Activated B cell treated with CpG ODN at 0.5 μM for 24 hours (primary cell): ENCODE measurements at regions of chr3 and their contacts with region 1.

Region 1: GRCh38 chr3:152183473-152183872 is 85.3 kb upstream of the MBNL1 start:
- DNase-seq: peak; percentile 20
- ATAC-seq: peak; percentile 87
- H3K4me3 Mint-ChIP-seq: peak overlapping the region; percentile 5
- H3K27ac Mint-ChIP-seq: no peak overlapping the region
- H3K4me1 Mint-ChIP-seq: peaks cover 30% of the 10 kb centered on the region
- H3K27me3 Mint-ChIP-seq: no peaks in the 10 kb centered on the region
- CTCF ChIP-seq: no peak

Region 2: DNA sequence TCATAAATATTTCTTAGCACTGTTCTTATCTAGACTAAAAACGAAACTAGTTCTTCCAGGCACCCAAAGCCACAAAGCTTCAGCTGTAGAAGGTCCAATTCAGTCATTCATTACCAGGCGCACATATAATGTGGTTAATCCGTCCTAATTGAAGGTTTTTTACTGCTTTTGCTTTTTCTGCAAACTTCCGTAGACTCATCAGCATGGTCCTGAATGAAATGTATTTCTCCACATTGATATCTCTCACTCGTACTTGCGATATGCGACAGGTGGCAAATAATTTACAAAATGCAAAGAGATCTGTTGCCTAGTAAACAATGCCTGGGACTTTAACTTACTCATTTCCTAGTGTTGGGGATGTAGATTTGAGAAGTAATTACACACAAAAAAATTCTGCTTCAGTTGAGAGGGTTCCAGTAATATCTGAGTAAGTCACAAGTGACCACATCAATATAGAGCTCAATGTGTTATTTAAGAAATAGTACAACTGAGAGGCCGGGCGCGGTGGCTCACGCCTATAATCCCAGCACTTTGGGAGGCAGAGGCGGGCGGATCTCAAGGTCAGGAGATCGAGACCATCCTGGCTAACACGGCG is 10.3 kb after region 1 on chr3:
- CTCF ChIA-PET with region 1: interaction called, 19 read pairs
- POLR2A ChIA-PET with region 1: interaction called, 14 read pairs
- intact Hi-C with region 1: no loop called
- DNase-seq: no peak
- ATAC-seq: peak; percentile 53
- H3K4me3 Mint-ChIP-seq: peak overlapping the region; percentile 73
- H3K27ac Mint-ChIP-seq: peak overlapping the region; percentile 78
- H3K4me1 Mint-ChIP-seq: peaks cover 77% of the 10 kb centered on the region
- H3K27me3 Mint-ChIP-seq: no peaks in the 10 kb centered on the region
- CTCF ChIP-seq: no peak

Region 3: GRCh38 chr3:152205097-152205593 is 21.7 kb after region 1 on chr3:
- CTCF ChIA-PET with region 1: interaction called, 6 read pairs
- POLR2A ChIA-PET with region 1: interaction called, 20 read pairs
- intact Hi-C with region 1: no loop called
- DNase-seq: no peak
- ATAC-seq: peak; percentile 72
- H3K4me3 Mint-ChIP-seq: peak overlapping the region; percentile 95
- H3K27ac Mint-ChIP-seq: peak overlapping the region; percentile 99
- H3K4me1 Mint-ChIP-seq: peaks cover 58% of the 10 kb centered on the region
- H3K27me3 Mint-ChIP-seq: no peaks in the 10 kb centered on the region
- CTCF ChIP-seq: no peak

Region 4: GRCh38 chr3:152258448-152259393 is 75.2 kb after region 1 on chr3:
- CTCF ChIA-PET with region 1: interaction called, 10 read pairs
- POLR2A ChIA-PET with region 1: no interaction called
- intact Hi-C with region 1: no loop called
- DNase-seq: no peak
- ATAC-seq: peak; percentile 23
- H3K4me3 Mint-ChIP-seq: peak overlapping the region; percentile 39
- H3K27ac Mint-ChIP-seq: peak overlapping the region; percentile 86
- H3K4me1 Mint-ChIP-seq: peaks cover 79% of the 10 kb centered on the region
- H3K27me3 Mint-ChIP-seq: no peaks in the 10 kb centered on the region
- CTCF ChIP-seq: no peak

Region 5: GRCh38 chr3:152438181-152438580 is 254.7 kb after region 1 on chr3:
- CTCF ChIA-PET with region 1: interaction called, 89 read pairs
- POLR2A ChIA-PET with region 1: no interaction called
- intact Hi-C with region 1: loop called (anchors 1 kb)
- DNase-seq: no peak
- ATAC-seq: no peak
- H3K4me3 Mint-ChIP-seq: no peak overlapping the region
- H3K27ac Mint-ChIP-seq: no peak overlapping the region
- H3K4me1 Mint-ChIP-seq: peaks cover 78% of the 10 kb centered on the region
- H3K27me3 Mint-ChIP-seq: no peaks in the 10 kb centered on the region
- CTCF ChIP-seq: no peak

Region 6: DNA sequence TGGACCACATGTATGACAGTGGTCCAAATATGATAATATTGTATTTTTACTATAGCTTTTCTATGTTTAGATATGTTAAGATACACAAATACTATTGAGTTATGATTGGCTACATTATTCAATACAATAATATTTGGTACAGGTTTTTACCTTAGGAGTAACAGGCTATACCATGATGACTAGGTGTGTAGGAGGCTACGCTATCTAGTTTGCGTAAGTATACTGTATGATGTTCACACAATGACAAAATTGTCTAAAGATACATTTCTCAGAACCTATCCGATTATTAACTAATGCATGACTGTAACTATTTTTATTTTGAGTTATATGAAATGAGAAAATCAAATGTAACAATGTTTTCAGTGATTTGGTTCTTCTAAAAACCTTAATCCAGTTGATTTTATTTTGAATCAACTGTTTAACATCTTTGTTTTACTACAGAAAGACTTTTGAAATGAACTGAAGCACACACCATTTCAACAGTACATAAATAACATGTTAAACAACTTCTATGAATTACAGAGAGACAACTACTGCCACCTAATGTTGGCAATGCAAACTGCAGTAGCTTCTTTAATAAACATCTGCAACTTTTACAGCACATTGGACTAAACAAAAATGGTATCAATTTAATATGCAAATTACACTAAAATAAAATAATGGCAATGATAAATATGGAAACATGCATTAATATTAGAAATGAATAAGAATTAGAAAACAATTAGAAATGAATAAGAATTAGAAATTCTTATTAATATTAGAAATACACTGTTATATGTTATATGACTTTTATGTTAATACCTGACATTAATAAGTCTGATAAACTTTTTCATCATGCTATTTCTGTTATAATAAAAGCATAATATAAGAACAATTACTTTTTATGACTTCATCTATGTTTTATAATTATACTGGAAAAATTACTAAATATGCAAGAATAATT is 341.0 kb after region 1 on chr3:
- CTCF ChIA-PET with region 1: no interaction called
- POLR2A ChIA-PET with region 1: no interaction called
- intact Hi-C with region 1: loop called (anchors 5 kb)
- DNase-seq: no peak
- ATAC-seq: peak; percentile 77
- H3K4me3 Mint-ChIP-seq: no peak overlapping the region
- H3K27ac Mint-ChIP-seq: no peak overlapping the region
- H3K4me1 Mint-ChIP-seq: peaks cover 33% of the 10 kb centered on the region
- H3K27me3 Mint-ChIP-seq: no peaks in the 10 kb centered on the region
- CTCF ChIP-seq: peak; percentile 96